Calu3 (cell line): ENCODE measurements at regions of chr1 and their contacts with region 1.

Region 1: DNA sequence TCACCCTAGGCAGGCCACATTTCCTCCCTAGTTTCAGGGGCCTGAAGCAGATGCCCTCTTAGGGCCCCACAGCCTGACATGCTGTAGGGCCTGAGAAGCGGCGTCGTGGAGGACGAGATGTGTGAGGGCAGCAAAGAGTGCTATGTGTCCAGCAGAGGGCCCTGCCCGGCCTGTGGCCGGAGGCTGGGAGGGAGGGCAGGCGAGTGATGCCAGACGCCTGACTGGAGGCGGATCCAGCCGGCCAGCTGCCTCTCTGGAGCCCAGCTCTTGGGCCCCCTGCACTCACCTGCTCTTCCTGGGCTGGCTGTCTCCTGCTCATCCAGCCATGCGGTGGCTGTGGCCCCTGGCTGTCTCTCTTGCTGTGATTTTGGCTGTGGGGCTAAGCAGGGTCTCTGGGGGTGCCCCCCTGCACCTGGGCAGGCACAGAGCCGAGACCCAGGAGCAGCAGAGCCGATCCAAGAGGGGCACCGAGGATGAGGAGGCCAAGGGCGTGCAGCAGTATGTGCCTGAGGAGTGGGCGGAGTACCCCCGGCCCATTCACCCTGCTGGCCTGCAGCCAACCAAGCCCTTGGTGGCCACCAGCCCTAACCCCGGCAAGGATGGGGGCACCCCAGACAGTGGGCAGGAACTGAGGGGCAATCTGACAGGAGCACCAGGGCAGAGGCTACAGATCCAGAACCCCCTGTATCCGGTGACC is at the start of gene GPR37L1:
- DNase-seq: peak; percentile 79
- H3K4me3 Mint-ChIP-seq: no peak within 1 kb of the TSS
- H3K27ac Mint-ChIP-seq: peak within 1 kb of the TSS; percentile 11
- H3K4me1 Mint-ChIP-seq: peaks cover 14% of the 10 kb centered on the region
- H3K27me3 Mint-ChIP-seq: peaks cover 20% of the 10 kb centered on the region
- CTCF ChIP-seq: peak; percentile 72
- total RNA-seq, gene GPR37L1: 0.12 and 0.22 TPM in 2 replicates

Region 2: GRCh38 chr1:201982623-201983379 is 140.0 kb before region 1 on chr1 and contains the start of gene RNPEP:
- CTCF ChIA-PET with region 1: interaction called, 4 read pairs
- intact Hi-C with region 1: loop called (anchors 1 kb)
- DNase-seq: peak; percentile 77
- H3K4me3 Mint-ChIP-seq: peak within 1 kb of the TSS; percentile 96
- H3K27ac Mint-ChIP-seq: peak within 1 kb of the TSS; percentile 84
- H3K4me1 Mint-ChIP-seq: peaks cover 9% of the 10 kb centered on the region
- H3K27me3 Mint-ChIP-seq: no peaks in the 10 kb centered on the region
- CTCF ChIP-seq: peak; percentile 12
- total RNA-seq, gene RNPEP: 86.1 and 91.6 TPM in 2 replicates